GM10248 (cell line): ENCODE measurements at regions of chr5 and their contacts with region 1.

Region 1: GRCh38 chr5:34474573-34475021 is 181.5 kb upstream of the RAI14 start:
- DNase-seq: peak; percentile 58
- CTCF ChIP-seq: peak; percentile 91

Region 2: DNA sequence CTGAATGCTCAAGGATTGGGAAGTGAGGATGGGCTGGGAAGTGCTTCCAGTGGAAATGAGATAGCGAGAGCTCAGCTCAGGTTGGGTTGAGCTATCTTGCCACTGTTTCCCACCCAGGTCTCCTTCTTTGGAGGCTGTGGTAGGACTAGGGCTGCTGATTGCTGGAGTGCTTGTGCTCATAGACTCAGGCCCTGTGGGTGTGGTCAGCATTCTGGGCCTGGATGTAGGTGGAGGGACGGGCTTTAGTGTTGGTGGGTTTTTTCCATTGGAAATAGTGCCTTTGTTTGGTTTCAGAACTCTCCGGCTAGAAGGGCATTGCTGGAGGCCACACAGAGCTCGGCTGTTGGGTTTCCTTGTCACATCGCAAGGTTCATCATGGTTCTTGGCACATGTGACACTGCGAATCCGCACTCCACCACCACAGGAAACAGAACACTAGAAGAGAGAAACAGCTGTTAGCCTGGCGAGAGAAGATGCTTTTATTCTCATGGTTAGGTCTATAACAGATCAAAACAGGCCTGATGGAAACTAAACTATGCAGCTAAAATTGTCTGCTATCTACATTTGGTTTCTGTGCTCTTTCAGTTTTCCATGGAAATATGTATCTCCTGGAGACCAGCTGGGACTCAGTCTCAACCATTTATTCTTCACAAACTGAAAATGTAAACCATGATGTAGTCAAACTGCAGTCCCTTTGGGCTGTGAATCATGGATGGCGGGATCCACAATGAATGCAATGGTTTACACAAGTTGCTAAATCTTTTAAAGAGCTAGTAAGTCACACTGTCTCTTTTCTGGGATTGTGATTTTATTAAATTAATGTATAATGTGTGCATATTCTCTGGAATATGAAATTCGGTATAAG is 897.6 kb before region 1 on chr5:
- CTCF ChIA-PET with region 1: no interaction called
- POLR2A ChIA-PET with region 1: no interaction called
- DNase-seq: no peak
- CTCF ChIP-seq: no peak

Region 3: GRCh38 chr5:34499001-34499734 is 24.6 kb after region 1 on chr5:
- CTCF ChIA-PET with region 1: interaction called, 14 read pairs
- POLR2A ChIA-PET with region 1: no interaction called
- DNase-seq: peak; percentile 37
- CTCF ChIP-seq: no peak

Region 4: GRCh38 chr5:34533582-34534522 is 59.3 kb after region 1 on chr5:
- CTCF ChIA-PET with region 1: interaction called, 13 read pairs
- POLR2A ChIA-PET with region 1: no interaction called
- DNase-seq: no peak
- CTCF ChIP-seq: no peak